Testis (tissue), 5 donors: ENCODE measurements at regions of chr1 and their contacts with region 1.

Region 1: GRCh38 chr1:39258146-39258924 is 53.8 kb downstream of the MACF1 start:
- DNase-seq: peak; percentile 86
- H3K4me3 ChIP-seq: no peak overlapping the region
- H3K27ac ChIP-seq: peak overlapping the region in 1 of 2 donors; percentile 15
- H3K4me1 ChIP-seq: no peaks in the 10 kb centered on the region
- H3K27me3 ChIP-seq: no peaks in the 10 kb centered on the region
- CTCF ChIP-seq: peak; percentile 77 to 82 (median 81)
- POLR2A ChIP-seq: no peak

Region 2: GRCh38 chr1:39098546-39099250 is 159.6 kb before region 1 on chr1:
- intact Hi-C with region 1: loop called (anchors 5 kb)
- DNase-seq: peak; percentile 73
- H3K4me3 ChIP-seq: no peak overlapping the region
- H3K27ac ChIP-seq: no peak overlapping the region
- H3K4me1 ChIP-seq: peaks cover 6% of the 10 kb centered on the region
- H3K27me3 ChIP-seq: no peaks in the 10 kb centered on the region
- CTCF ChIP-seq: peak; percentile 33 to 62 (median 59)
- POLR2A ChIP-seq: no peak

Region 3: DNA sequence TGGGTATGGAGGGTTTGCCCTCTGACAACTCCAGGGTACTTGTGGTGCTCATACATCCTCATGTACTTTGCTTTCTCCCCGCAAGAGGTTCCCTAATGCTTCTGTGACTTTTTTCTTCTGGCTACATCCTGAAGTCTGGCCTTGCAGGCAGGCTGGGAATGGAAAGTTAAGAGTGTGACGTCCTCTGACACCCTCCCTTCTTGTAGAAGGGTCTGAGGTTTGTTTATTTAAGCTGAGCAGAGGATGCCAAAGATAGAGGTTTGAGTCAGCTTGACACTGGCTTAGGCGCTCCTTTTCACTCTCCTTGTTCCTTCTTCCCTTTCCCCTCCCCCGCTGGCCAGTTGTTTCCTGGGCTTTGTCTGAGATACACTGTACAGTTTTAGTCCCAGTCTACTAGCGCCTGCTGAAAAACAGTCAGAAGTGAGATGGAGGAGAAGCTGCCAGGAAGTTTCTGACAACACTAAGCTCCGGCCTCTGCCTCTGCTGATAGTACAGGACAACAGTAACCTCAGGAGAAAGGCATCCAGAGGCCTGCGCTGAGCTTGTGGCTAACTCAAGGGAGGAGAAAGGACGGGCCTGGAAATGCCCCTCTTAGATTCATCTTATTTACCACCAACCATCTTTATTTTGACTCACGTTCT is 53.8 kb before region 1 on chr1 and contains the start of gene MACF1:
- intact Hi-C with region 1: loop called (anchors 10 kb)
- DNase-seq: peak; percentile 76
- H3K4me3 ChIP-seq: peak within 1 kb of the TSS; percentile 8 to 27
- H3K27ac ChIP-seq: peak within 1 kb of the TSS; percentile 87 to 92
- H3K4me1 ChIP-seq: peaks cover 29% of the 10 kb centered on the region
- H3K27me3 ChIP-seq: no peaks in the 10 kb centered on the region
- CTCF ChIP-seq: peak in 2 of 3 experiments; percentile 22 to 57
- POLR2A ChIP-seq: no peak
- total RNA-seq, gene MACF1: 422 to 494 TPM